HepG2 (cell line): ENCODE measurements at regions of chr7 and their contacts with region 1.

Region 1: GRCh38 chr7:148185041-148185440 is 405.5 kb upstream of the C7orf33 start:
- DNase-seq: no peak
- ATAC-seq: no peak
- H3K4me3 ChIP-seq: no peak overlapping the region
- H3K27ac ChIP-seq: no peak overlapping the region
- H3K4me1 ChIP-seq: no peaks in the 10 kb centered on the region
- H3K27me3 ChIP-seq: 0 out of 5 replicates have a peak, but pooled peaks cover 0 to 5% of the 10 kb centered on the region in 2 experiments
- CTCF ChIP-seq: no peak
- EP300 ChIP-seq: no peak
- POLR2A ChIP-seq: no peak
- RAD21 ChIP-seq: no peak

Region 2: GRCh38 chr7:148211740-148212151 is 26.7 kb after region 1 on chr7:
- CTCF ChIA-PET with region 1: no interaction called
- POLR2A ChIA-PET with region 1: no interaction called
- in situ Hi-C with region 1: no loop called
- intact Hi-C with region 1: loop called (anchors 1 kb)
- DNase-seq: no peak
- ATAC-seq: no peak
- H3K4me3 ChIP-seq: no peak overlapping the region
- H3K27ac ChIP-seq: no peak overlapping the region
- H3K4me1 ChIP-seq: no peaks in the 10 kb centered on the region
- H3K27me3 ChIP-seq: peaks cover 0 to 24% of the 10 kb centered on the region in 2 experiments; a peak in 1 of 5 replicates
- CTCF ChIP-seq: no peak
- EP300 ChIP-seq: no peak
- POLR2A ChIP-seq: no peak
- RAD21 ChIP-seq: no peak

Region 3: DNA sequence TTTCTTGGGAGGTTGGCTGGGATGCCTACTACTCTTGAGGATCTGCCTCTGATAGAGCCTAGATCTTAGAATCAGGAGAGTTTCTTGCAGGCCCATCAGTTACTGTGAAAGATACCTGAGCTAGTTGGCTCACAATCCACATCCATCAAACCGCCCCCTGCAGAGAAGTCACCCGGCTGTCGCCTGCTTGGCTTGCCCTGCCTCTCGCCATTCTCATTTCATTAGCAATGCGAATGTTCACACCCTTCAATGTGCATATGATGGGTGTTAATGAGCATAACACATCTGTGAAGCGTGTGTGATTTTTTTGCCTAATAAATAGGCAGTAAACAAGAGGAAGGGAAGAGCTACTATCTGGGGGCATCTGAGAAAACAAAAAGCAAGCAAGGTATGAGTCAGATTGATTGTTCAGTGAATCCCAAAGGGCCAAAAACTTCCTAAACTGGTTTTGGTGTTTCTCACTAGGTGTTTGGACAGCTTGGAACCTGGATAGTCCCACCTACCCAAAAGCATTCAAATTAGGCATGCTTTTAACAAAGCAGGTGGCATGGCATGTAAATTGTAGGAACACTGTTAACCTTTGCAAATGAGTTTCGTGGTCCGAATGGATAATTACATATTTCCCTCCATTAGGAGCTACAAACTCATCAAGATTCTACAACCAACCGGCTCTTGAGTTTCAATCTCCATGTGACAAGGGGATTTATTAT is 133.2 kb after region 1 on chr7:
- CTCF ChIA-PET with region 1: no interaction called
- POLR2A ChIA-PET with region 1: no interaction called
- in situ Hi-C with region 1: no loop called
- intact Hi-C with region 1: no loop called
- DNase-seq: no peak
- ATAC-seq: no peak
- H3K4me3 ChIP-seq: no peak overlapping the region
- H3K27ac ChIP-seq: no peak overlapping the region
- H3K4me1 ChIP-seq: no peaks in the 10 kb centered on the region
- H3K27me3 ChIP-seq: no peaks in the 10 kb centered on the region; a peak in 1 of 5 replicates
- CTCF ChIP-seq: no peak
- EP300 ChIP-seq: no peak
- POLR2A ChIP-seq: no peak
- RAD21 ChIP-seq: no peak